Posterior vena cava (tissue), 2 donors: ENCODE measurements at regions of chr1 and their contacts with region 1.

Region 1: DNA sequence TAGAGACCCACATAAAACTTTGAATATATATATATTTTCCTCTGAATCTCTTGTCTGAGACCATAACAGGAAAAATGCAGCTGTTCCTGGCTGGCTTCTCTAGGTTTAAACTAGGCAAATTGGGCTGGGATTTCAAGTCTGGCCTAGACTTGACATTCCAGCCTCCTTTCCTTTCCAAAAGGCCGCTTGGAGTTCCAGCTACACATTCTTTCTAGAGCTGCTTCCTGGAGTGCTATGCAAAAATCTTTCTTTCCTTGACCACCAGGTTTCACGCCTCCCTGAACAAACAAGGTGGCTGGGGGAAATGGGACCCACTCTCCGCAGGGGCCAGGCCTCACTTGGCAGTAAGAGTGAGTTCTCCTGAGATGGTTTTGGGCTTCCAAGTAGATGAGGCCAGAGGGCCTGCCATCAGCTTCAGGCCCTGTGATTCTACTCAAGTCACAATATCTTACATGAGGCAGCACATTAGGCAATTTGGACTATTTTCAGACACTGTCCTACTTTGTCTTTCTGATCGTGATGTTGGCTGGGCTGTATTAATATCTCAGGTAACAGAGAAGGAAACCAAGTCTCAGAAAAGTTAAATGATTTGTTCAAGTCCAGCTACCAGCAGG is 102.4 kb downstream of the FAM78B start:
- DNase-seq: no peak

Region 2: GRCh38 chr1:165737196-165737595 is 327.2 kb before region 1 on chr1:
- intact Hi-C with region 1: no loop called
- DNase-seq: no peak

Region 3: DNA sequence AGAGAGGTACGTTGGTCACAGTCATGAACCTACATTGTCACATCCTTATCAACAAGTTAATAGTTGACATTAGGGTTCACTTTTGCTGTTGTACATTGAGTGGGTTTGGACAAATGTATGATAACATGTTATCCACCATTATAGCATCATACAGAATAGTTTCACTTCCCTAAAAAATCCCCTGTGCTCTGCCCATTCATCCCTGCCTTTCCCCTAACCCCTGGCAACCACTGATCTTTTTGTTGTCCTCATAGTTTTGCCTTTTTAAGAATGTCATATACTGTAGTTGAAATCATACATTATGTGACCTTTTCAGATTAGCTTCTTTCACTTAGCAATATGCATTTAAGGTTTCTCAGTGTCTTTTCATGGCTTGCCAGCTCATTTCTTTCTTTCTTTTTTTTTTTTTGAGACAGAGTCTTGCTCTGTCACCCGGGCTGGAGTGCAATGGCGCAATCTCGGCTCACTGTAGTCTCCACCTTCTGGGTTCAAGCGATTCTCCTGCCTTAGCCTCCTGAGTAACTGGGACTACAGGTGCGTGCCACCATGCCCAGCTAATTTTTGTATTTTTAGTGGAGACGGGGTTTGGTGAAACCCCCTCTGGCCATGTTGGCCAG is 186.4 kb before region 1 on chr1:
- intact Hi-C with region 1: no loop called
- DNase-seq: no peak

Region 4: GRCh38 chr1:166086113-166086883 is 21.9 kb after region 1 on chr1:
- intact Hi-C with region 1: loop called in 1 of 2 experiments (anchors 2 kb)
- DNase-seq: no peak